Kidney (tissue), 22 donors: ENCODE measurements at regions of chr7 and their contacts with region 1.

Region 1: DNA sequence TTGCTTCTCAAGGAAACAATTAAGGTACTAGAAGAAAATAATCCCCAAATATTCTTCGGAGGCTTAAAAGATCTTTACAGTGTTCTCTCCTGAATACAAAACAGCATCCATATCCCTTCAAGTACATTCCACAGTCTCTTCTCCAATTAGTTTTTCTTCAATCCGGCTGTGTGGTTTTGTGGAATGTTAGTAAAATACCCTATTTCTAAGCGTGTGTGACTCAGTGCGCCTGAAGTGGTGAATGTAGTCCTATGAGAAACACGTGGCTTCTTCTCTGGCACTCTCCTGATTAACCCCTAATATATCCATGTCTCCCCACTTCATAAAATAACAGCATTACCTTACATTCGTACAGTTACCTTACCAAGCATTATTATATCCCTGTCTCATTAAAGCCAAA is 570.2 kb downstream of the ARL4A start:
- DNase-seq: no peak
- H3K4me3 ChIP-seq: no peak overlapping the region
- H3K27ac ChIP-seq: no peak overlapping the region
- H3K4me1 ChIP-seq: no peaks in the 10 kb centered on the region
- H3K27me3 ChIP-seq: no peaks in the 10 kb centered on the region
- CTCF ChIP-seq: no peak

Region 2: DNA sequence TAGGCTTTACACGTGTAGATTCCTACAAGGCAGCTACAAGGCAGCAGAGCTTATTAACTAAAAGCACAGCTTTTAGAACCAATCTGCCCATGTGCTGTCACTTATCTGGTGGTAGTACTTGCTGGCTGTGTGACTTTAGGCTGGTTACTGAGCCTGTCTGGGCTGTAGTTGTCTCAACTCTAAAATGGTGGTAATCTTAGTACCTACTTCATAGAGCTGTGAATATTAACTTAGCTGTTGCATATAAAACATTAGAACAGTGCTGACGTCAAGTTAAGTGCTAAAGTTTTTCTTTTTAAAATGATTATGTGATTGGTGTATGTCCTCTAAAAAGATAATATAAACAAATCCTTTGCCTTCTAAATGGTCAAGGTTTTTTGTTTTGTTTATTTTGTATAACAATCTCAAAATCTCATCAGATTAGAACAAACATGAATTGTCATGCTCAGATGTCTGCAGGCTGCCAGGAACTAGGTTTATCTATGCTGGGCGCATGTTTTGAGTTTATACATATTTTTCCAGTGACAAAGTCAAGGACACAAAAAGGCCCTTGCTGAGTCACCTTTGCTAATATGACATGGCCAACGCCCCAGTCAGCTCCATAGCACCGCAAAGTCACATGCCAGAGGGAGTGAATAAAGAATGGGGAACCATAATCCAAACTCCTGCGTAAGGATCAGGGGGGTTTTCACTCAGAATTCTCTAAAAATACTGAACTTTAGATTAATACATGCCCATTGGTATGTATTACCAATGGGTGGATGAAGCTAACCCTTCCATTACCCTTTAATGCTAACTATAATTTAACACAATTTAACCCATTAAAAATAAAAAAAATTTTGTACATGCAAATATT is 610.1 kb before region 1 on chr7:
- intact Hi-C with region 1: loop called (anchors 10 kb)
- DNase-seq: no peak
- H3K4me3 ChIP-seq: no peak overlapping the region
- H3K27ac ChIP-seq: no peak overlapping the region
- H3K4me1 ChIP-seq: peaks cover 0 to 2% (median 0%) of the 10 kb centered on the region in 3 donors
- H3K27me3 ChIP-seq: no peaks in the 10 kb centered on the region
- CTCF ChIP-seq: no peak

Region 3: GRCh38 chr7:12907774-12908173 is 349.9 kb before region 1 on chr7:
- intact Hi-C with region 1: no loop called
- DNase-seq: no peak
- H3K4me3 ChIP-seq: no peak overlapping the region
- H3K27ac ChIP-seq: no peak overlapping the region
- H3K4me1 ChIP-seq: no peaks in the 10 kb centered on the region
- H3K27me3 ChIP-seq: no peaks in the 10 kb centered on the region
- CTCF ChIP-seq: no peak

Region 4: DNA sequence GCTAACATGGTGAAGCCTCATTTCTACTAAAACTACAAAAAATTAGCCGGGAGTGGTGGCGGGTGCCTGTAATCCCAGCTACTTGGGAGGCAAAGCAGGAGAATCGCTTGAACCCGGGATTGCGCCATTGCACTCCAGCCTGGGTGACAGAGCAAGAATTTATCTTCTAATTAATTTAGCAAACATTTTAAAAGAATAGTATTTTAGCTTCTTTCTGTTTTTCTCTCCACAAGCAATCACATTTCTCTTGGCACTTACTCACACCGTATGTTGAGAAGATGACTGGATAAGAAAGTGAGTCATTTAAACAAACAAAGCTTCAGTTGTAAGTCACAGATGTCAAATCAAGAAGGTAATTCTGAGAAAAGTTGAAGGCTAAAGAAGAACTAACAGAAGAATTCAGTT is 306.3 kb before region 1 on chr7:
- intact Hi-C with region 1: no loop called
- DNase-seq: no peak
- H3K4me3 ChIP-seq: no peak overlapping the region
- H3K27ac ChIP-seq: no peak overlapping the region
- H3K4me1 ChIP-seq: no peaks in the 10 kb centered on the region
- H3K27me3 ChIP-seq: no peaks in the 10 kb centered on the region
- CTCF ChIP-seq: no peak

Region 5: DNA sequence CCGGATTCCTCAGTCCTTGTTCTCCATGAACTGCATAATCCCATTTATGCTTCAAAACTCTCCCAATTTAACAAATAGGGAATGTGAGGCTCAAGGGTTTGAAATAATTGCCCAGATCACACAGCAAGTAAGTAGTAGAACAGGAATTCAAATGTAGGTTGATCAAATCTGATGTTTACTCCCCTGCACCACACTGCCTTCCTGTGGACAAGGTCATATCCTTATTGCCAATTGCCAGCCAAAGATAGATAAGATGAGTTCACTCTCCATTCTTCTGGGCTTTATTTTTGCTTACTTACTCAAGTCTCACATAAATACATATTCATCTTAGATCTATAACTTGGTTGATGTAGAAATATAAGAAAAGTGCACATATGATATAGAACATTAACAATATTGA is 1167.0 kb after region 1 on chr7:
- intact Hi-C with region 1: no loop called
- DNase-seq: no peak
- H3K4me3 ChIP-seq: no peak overlapping the region
- H3K27ac ChIP-seq: no peak overlapping the region
- H3K4me1 ChIP-seq: no peaks in the 10 kb centered on the region
- H3K27me3 ChIP-seq: no peaks in the 10 kb centered on the region
- CTCF ChIP-seq: no peak